Activated naive CD4-positive, alpha-beta T cell treated with anti-CD3 and anti-CD28 coated beads, Interleukin-2, amount 10 ng/mL, durations not matched to agents 7 days and 5 days (primary cell): ENCODE measurements at regions of chr5 and their contacts with region 1.

Region 1: DNA sequence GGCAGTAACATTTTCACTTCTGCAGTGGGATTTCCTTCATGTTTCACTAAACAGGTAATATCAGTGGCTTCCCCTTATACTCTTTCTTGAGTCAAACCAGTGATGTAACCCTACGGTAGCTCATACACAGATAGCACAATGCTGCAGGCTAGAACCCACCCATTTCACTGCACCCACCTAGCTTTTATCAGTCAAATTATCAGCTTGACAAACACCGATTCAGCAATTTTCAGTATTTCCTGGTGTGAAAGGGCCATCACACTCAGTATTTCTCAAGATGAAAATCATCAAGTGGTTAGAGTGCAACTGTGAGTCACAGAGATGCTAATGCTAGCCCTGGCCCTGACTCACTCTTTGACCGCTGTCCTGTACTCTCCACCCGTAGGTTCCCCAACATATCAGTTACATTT is 242.3 kb upstream of the PTGER4 start:
- DNase-seq: no peak
- H3K4me3 Mint-ChIP-seq: no peak overlapping the region
- H3K27ac Mint-ChIP-seq: peak overlapping the region; percentile 74
- H3K4me1 Mint-ChIP-seq: peaks cover 65% of the 10 kb centered on the region
- H3K27me3 Mint-ChIP-seq: no peaks in the 10 kb centered on the region

Region 2: GRCh38 chr5:40410231-40410861 is 27.1 kb before region 1 on chr5:
- CTCF ChIA-PET with region 1: interaction called, 18 read pairs
- DNase-seq: peak; percentile 74
- H3K4me3 Mint-ChIP-seq: peak overlapping the region; percentile 58
- H3K27ac Mint-ChIP-seq: peak overlapping the region; percentile 91
- H3K4me1 Mint-ChIP-seq: peaks cover 62% of the 10 kb centered on the region
- H3K27me3 Mint-ChIP-seq: no peaks in the 10 kb centered on the region

Region 3: GRCh38 chr5:40453689-40454088 is 16.2 kb after region 1 on chr5:
- CTCF ChIA-PET with region 1: no interaction called
- DNase-seq: no peak
- H3K4me3 Mint-ChIP-seq: no peak overlapping the region
- H3K27ac Mint-ChIP-seq: no peak overlapping the region
- H3K4me1 Mint-ChIP-seq: no peaks in the 10 kb centered on the region
- H3K27me3 Mint-ChIP-seq: no peaks in the 10 kb centered on the region